GM12878 (cell line): ENCODE measurements at regions of chr5 and their contacts with region 1.

Region 1: GRCh38 chr5:143302341-143302740 is 101.1 kb downstream of the NR3C1 start:
- DNase-seq: no peak
- ATAC-seq: no peak
- H3K4me3 ChIP-seq: no peak overlapping the region
- H3K27ac ChIP-seq: no peak overlapping the region
- H3K4me1 ChIP-seq: no peaks in the 10 kb centered on the region
- H3K27me3 ChIP-seq: no peaks in the 10 kb centered on the region
- CTCF ChIP-seq: no peak
- EP300 ChIP-seq: no peak
- POLR2A ChIP-seq: no peak
- RAD21 ChIP-seq: no peak

Region 2: GRCh38 chr5:142701673-142702311 is 600.5 kb before region 1 on chr5:
- CTCF ChIA-PET with region 1: no interaction called
- POLR2A ChIA-PET with region 1: no interaction called
- RAD21 ChIA-PET with region 1: no interaction called
- SMC1A ChIA-PET with region 1: no interaction called
- in situ Hi-C with region 1: no loop called
- intact Hi-C with region 1: no loop called
- DNase-seq: no peak
- ATAC-seq: no peak
- H3K4me3 ChIP-seq: no peak overlapping the region
- H3K27ac ChIP-seq: no peak overlapping the region
- H3K4me1 ChIP-seq: no peaks in the 10 kb centered on the region
- H3K27me3 ChIP-seq: no peaks in the 10 kb centered on the region; a peak in 1 of 4 replicates
- CTCF ChIP-seq: no peak
- EP300 ChIP-seq: no peak
- POLR2A ChIP-seq: no peak
- RAD21 ChIP-seq: no peak

Region 3: GRCh38 chr5:143094087-143094521 is 208.2 kb before region 1 on chr5:
- CTCF ChIA-PET with region 1: no interaction called
- POLR2A ChIA-PET with region 1: no interaction called
- RAD21 ChIA-PET with region 1: no interaction called
- SMC1A ChIA-PET with region 1: no interaction called
- in situ Hi-C with region 1: no loop called
- intact Hi-C with region 1: no loop called
- DNase-seq: no peak
- ATAC-seq: peak; percentile 62
- H3K4me3 ChIP-seq: peak overlapping the region; percentile 54
- H3K27ac ChIP-seq: peak overlapping the region; percentile 34; the same call in 1 of the 2 replicates
- H3K4me1 ChIP-seq: no peaks in the 10 kb centered on the region
- H3K27me3 ChIP-seq: no peaks in the 10 kb centered on the region
- CTCF ChIP-seq: 0 out of 6 replicates have a peak, but pooled peaks of 1 of the 3 experiments have one; percentile 8
- EP300 ChIP-seq: no peak
- POLR2A ChIP-seq: no peak
- RAD21 ChIP-seq: peak; percentile 43

Region 4: DNA sequence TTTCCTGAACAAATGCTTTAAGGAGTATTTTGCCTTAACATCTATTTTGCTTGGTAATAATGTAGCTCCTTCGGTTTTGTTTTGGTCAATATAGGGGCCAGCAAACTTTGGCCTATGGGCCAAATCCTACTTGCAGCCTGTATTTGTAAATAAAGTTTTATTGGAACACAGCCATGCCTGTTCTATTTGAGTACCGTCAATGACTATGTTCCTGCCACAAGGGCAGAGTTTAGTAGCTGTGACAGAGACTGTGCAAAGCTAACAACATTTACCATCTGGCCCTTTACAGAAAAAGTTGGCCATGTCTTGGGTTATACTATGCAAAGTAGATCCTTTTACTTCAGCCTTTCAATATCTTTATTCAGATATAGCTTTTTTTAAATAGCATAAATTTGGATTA is 12.2 kb before region 1 on chr5:
- CTCF ChIA-PET with region 1: interaction called, 5 read pairs
- POLR2A ChIA-PET with region 1: no interaction called
- RAD21 ChIA-PET with region 1: interaction called, 4 read pairs
- SMC1A ChIA-PET with region 1: interaction called, 10 read pairs
- in situ Hi-C with region 1: no loop called
- intact Hi-C with region 1: no loop called
- DNase-seq: no peak
- ATAC-seq: peak; percentile 45; the same call in 2 of the 3 replicates
- H3K4me3 ChIP-seq: no peak overlapping the region
- H3K27ac ChIP-seq: no peak overlapping the region
- H3K4me1 ChIP-seq: no peaks in the 10 kb centered on the region
- H3K27me3 ChIP-seq: no peaks in the 10 kb centered on the region
- CTCF ChIP-seq: no peak
- EP300 ChIP-seq: no peak
- POLR2A ChIP-seq: no peak
- RAD21 ChIP-seq: no peak

Region 5: DNA sequence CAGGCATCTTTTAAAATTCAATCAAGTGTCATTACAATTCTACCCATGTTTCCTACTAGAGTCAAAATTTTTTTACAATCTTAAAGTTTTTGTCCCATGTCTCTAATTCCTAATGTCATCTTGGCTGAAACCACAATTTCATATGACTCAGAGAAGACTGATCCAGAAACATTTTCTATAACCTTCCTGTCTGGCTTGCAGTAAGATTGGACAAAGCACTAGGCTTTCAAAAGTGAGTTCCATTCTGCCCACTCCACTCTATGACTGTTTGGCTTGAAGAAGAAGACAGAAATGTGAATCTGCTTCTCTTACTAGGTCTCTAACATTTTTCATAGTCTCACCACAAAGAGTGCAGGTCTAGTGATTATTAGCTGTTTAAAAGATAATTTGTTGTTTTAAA is 12.3 kb after region 1 on chr5:
- CTCF ChIA-PET with region 1: interaction called, 3 read pairs
- POLR2A ChIA-PET with region 1: interaction called, 6 read pairs
- RAD21 ChIA-PET with region 1: no interaction called
- SMC1A ChIA-PET with region 1: interaction called, 14 read pairs
- in situ Hi-C with region 1: no loop called
- intact Hi-C with region 1: no loop called
- DNase-seq: no peak
- ATAC-seq: peak; percentile 61
- H3K4me3 ChIP-seq: no peak overlapping the region
- H3K27ac ChIP-seq: 0 out of 2 replicates have a peak overlapping the region, but pooled peaks have one; percentile 7
- H3K4me1 ChIP-seq: peaks cover 16% of the 10 kb centered on the region; the same call in 1 of the 2 replicates
- H3K27me3 ChIP-seq: no peaks in the 10 kb centered on the region
- CTCF ChIP-seq: no peak
- EP300 ChIP-seq: no peak
- POLR2A ChIP-seq: no peak
- RAD21 ChIP-seq: no peak

Region 6: DNA sequence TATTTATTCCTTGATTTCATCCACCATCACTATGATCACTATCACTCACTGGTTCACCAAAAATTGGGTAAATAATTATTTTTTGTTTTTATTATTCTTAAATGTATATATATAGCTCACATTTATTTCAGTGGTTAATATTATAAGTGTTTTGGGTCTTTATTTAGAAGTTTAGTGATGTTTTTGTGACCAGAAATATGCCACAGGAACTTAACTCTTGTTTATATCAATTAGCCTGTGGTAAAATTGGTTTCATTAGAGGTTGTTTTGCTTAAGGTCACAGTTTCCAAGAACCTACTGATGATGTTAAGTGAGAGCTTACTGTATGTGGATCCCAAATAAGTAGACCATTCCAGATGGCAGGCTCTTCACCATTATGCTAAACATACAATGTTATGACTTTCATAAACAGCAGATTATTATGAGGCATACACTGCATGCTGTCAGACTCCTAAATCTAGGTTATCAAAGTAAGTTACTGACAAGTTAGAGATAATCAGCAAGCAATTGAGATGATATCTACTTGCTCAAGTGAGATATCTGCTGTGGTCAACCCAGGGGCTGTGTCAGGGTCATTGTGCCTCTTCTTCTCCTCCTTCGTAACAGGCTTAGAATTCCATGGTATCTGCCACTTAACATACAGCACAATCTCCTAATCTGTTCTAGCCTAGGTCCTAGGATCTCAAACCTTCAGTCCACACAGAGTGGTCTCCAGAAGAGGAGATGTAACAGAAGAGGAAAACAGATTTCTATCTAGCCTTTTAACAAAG is 43.5 kb after region 1 on chr5:
- CTCF ChIA-PET with region 1: no interaction called
- POLR2A ChIA-PET with region 1: no interaction called
- RAD21 ChIA-PET with region 1: no interaction called
- SMC1A ChIA-PET with region 1: no interaction called
- in situ Hi-C with region 1: no loop called
- intact Hi-C with region 1: no loop called
- DNase-seq: no peak
- ATAC-seq: peak; percentile 12; the same call in 2 of the 3 replicates
- H3K4me3 ChIP-seq: no peak overlapping the region
- H3K27ac ChIP-seq: no peak overlapping the region
- H3K4me1 ChIP-seq: peaks cover 35% of the 10 kb centered on the region
- H3K27me3 ChIP-seq: no peaks in the 10 kb centered on the region
- CTCF ChIP-seq: no peak
- EP300 ChIP-seq: no peak
- POLR2A ChIP-seq: no peak
- RAD21 ChIP-seq: no peak